GM12878 (cell line): ENCODE measurements at regions of chr1 and their contacts with region 1.

Region 1: DNA sequence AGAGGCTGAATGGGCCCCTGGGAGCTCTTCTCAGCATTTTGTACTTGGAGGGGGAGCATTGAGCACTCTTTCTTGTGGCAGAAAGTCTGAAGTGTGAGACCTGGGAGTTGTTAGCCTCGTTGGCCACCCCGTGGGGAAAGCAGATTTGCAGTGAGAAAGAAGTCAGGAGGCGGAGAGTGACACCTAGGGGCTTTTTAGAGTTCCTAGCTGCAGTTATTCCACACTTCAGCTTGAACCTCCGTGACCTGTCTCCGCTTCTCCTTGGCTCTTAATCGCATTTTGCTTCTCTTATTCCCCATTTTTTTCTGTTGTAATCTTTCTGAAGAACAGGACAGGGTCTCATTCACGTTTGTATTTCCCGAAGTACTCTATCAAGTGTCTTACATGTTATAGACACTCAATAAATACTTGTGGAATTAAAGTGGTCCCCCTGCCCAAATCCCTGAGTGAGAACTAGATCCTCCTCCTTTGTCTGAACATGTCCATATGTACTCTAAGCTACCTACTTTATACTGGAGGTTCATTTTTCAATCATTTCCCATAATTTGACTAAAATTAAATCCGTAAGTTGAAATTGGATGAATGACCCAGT is 14.5 kb upstream of the C1orf141 start:
- DNase-seq: peak; percentile 45
- ATAC-seq: peak; percentile 94
- H3K4me3 ChIP-seq: no peak overlapping the region
- H3K27ac ChIP-seq: no peak overlapping the region
- H3K4me1 ChIP-seq: no peaks in the 10 kb centered on the region
- H3K27me3 ChIP-seq: no peaks in the 10 kb centered on the region
- CTCF ChIP-seq: peak; percentile 68 to 87 (median 78)
- EP300 ChIP-seq: no peak
- POLR2A ChIP-seq: no peak
- RAD21 ChIP-seq: peak; percentile 90

Region 2: DNA sequence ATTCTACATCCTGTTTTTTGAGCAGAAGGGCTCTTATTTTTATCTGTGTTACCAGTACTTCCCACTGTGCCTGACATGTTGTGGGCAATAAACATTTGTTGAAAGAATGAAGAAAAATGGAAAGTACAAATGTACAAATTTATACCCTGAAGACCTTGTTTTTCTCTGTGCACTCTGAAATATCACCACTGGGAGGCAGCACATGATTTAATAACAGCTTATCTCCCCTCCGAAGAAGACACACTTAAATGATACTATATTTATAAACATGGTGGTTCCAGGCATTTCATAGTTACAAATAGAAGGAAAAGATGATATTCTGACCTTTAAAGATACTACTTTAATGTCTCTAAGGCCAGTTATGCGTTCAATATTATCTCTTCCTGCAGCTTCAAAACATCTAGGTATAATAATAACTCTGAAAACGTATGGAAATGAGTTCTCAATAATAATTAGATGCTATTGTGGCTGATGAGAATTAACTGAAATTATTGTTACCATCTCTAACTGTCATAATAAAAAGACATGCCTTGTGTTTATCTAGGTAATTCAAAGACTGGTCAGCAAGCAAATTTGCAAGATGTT is 384.2 kb before region 1 on chr1:
- CTCF ChIA-PET with region 1: interaction called, 50 read pairs
- POLR2A ChIA-PET with region 1: no interaction called
- RAD21 ChIA-PET with region 1: interaction called, 26 read pairs
- SMC1A ChIA-PET with region 1: interaction called, 29 read pairs
- in situ Hi-C with region 1: loop called (anchors 5 kb)
- intact Hi-C with region 1: loop called (anchors 2 kb)
- DNase-seq: no peak
- ATAC-seq: peak; percentile 80
- H3K4me3 ChIP-seq: no peak overlapping the region
- H3K27ac ChIP-seq: no peak overlapping the region
- H3K4me1 ChIP-seq: no peaks in the 10 kb centered on the region
- H3K27me3 ChIP-seq: no peaks in the 10 kb centered on the region
- CTCF ChIP-seq: peak; percentile 50 to 75 (median 69)
- EP300 ChIP-seq: no peak
- POLR2A ChIP-seq: no peak
- RAD21 ChIP-seq: peak; percentile 85

Region 3: GRCh38 chr1:67005068-67005467 is 144.2 kb before region 1 on chr1:
- CTCF ChIA-PET with region 1: interaction called, 22 read pairs
- POLR2A ChIA-PET with region 1: interaction called, 4 read pairs
- RAD21 ChIA-PET with region 1: interaction called, 12 read pairs
- SMC1A ChIA-PET with region 1: interaction called, 7 read pairs
- in situ Hi-C with region 1: no loop called
- intact Hi-C with region 1: no loop called
- DNase-seq: no peak
- ATAC-seq: no peak
- H3K4me3 ChIP-seq: no peak overlapping the region
- H3K27ac ChIP-seq: no peak overlapping the region
- H3K4me1 ChIP-seq: no peaks in the 10 kb centered on the region
- H3K27me3 ChIP-seq: no peaks in the 10 kb centered on the region
- CTCF ChIP-seq: no peak
- EP300 ChIP-seq: no peak
- POLR2A ChIP-seq: no peak
- RAD21 ChIP-seq: no peak

Region 4: DNA sequence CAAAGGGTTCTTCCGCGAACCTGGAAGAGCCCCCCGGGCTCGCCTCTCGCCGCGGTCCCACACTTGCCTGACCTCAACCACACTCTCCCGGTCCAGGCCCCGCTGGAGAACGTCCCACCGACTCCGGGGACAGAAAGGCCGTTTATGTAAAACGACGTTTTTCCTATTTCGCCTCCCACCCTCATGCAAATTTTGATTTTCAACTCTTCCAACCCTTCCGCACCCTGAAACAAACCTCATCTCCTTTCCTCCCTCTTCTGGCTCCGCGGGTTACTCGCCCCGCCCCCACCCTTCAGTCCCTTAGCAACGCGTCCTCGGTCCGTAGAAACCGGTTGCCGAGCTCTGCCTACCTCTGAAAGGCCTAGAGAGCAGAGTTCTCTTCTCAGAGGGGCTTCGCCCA is 14.6 kb before region 1 on chr1 and contains the start of gene C1orf141:
- CTCF ChIA-PET with region 1: interaction called, 16 read pairs
- POLR2A ChIA-PET with region 1: no interaction called
- RAD21 ChIA-PET with region 1: interaction called, 5 read pairs
- SMC1A ChIA-PET with region 1: interaction called, 6 read pairs
- in situ Hi-C with region 1: no loop called
- intact Hi-C with region 1: no loop called
- DNase-seq: no peak
- ATAC-seq: no peak
- H3K4me3 ChIP-seq: no peak within 1 kb of the TSS; the same call in 1 of the 2 replicates
- H3K27ac ChIP-seq: no peak within 1 kb of the TSS
- H3K4me1 ChIP-seq: no peaks in the 10 kb centered on the region
- H3K27me3 ChIP-seq: 0 out of 4 replicates have a peak, but pooled peaks cover 0 to 2% of the 10 kb centered on the region in 2 experiments
- CTCF ChIP-seq: no peak
- EP300 ChIP-seq: no peak
- POLR2A ChIP-seq: no peak
- RAD21 ChIP-seq: no peak
- polyA plus RNA-seq, gene C1orf141: not detected

Region 5: DNA sequence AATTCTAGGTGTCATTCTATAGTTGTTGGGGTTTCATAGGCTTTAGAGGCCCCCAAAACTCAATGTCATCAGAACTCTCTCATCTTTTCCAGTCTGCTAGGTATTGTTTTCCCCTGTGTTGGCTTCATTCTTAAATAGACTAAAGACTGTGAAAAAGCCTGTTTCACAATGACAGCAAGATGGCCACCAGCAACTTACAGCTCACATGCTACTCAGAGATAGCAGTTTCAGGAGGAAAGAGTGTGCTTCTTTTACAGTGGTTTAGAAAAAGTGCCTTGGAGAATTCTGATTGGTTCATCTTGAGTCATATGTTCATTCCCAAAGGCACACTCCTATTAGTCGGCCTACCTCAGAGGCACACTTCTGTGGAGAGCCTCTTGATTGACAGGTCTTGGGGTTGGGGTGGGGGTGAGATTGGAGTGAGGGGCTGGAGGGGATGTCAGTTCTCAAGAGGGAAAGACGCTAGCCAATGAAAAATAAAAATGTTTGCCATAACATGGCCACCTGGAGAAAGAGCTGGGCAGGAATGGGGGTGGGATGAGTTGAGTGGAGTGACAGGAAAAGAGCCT is 25.5 kb after region 1 on chr1:
- CTCF ChIA-PET with region 1: interaction called, 27 read pairs
- POLR2A ChIA-PET with region 1: interaction called, 3 read pairs
- RAD21 ChIA-PET with region 1: interaction called, 10 read pairs
- SMC1A ChIA-PET with region 1: interaction called, 34 read pairs
- in situ Hi-C with region 1: no loop called
- intact Hi-C with region 1: no loop called
- DNase-seq: no peak
- ATAC-seq: peak; percentile 72
- H3K4me3 ChIP-seq: no peak overlapping the region
- H3K27ac ChIP-seq: no peak overlapping the region
- H3K4me1 ChIP-seq: peaks cover 16% of the 10 kb centered on the region
- H3K27me3 ChIP-seq: no peaks in the 10 kb centered on the region
- CTCF ChIP-seq: no peak
- EP300 ChIP-seq: peak in 1 of 2 experiments; percentile 9; a peak in 1 of 4 replicates
- POLR2A ChIP-seq: no peak
- RAD21 ChIP-seq: no peak

Region 6: GRCh38 chr1:67201891-67202290 is 52.6 kb after region 1 on chr1:
- CTCF ChIA-PET with region 1: interaction called, 14 read pairs
- POLR2A ChIA-PET with region 1: no interaction called
- RAD21 ChIA-PET with region 1: no interaction called
- SMC1A ChIA-PET with region 1: interaction called, 3 read pairs
- in situ Hi-C with region 1: no loop called
- intact Hi-C with region 1: no loop called
- DNase-seq: no peak
- ATAC-seq: no peak
- H3K4me3 ChIP-seq: no peak overlapping the region
- H3K27ac ChIP-seq: no peak overlapping the region
- H3K4me1 ChIP-seq: no peaks in the 10 kb centered on the region
- H3K27me3 ChIP-seq: no peaks in the 10 kb centered on the region
- CTCF ChIP-seq: no peak
- EP300 ChIP-seq: no peak
- POLR2A ChIP-seq: no peak
- RAD21 ChIP-seq: no peak

Region 7: DNA sequence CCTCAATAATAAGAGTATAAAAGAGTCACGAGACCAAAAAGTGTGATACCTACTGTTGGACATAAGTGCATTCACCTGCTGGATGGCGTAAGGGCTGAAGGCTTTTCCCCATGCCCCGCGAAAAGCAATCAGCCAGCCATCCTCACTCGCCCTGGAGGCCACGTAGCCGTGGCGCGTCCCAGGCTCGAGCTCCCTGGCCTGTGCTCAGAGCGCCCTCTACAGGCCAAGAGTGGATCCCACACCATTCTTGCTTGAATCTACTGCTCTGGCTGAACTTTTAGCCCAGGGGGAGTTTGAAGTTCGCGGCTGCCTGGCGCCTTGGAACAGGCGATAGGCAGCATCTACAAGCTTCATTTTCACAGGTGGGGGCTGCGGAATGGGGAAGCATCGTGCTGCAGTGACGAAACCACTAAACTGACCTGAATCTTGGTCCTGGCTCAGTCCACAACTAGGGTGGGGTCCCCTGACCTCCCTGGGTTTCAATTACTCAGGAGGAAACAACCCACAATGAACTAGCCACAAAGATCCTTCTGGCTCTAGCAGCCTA is 351.2 kb after region 1 on chr1:
- CTCF ChIA-PET with region 1: interaction called, 18 read pairs
- POLR2A ChIA-PET with region 1: no interaction called
- RAD21 ChIA-PET with region 1: interaction called, 8 read pairs
- SMC1A ChIA-PET with region 1: interaction called, 8 read pairs
- in situ Hi-C with region 1: no loop called
- intact Hi-C with region 1: loop called (anchors 2 kb)
- DNase-seq: peak; percentile 55
- ATAC-seq: peak; percentile 100
- H3K4me3 ChIP-seq: no peak overlapping the region
- H3K27ac ChIP-seq: no peak overlapping the region
- H3K4me1 ChIP-seq: peaks cover 3% of the 10 kb centered on the region; the same call in 1 of the 2 replicates
- H3K27me3 ChIP-seq: 0 out of 4 replicates have a peak, but pooled peaks cover 0 to 2% of the 10 kb centered on the region in 2 experiments
- CTCF ChIP-seq: peak; percentile 97 to 99 (median 99); a peak in 5 of 6 replicates
- EP300 ChIP-seq: no peak
- POLR2A ChIP-seq: no peak
- RAD21 ChIP-seq: peak; percentile 100